Right ventricle myocardium superior (tissue), 1 donor: ENCODE measurements at regions of chr4 and their contacts with region 1.

Region 1: DNA sequence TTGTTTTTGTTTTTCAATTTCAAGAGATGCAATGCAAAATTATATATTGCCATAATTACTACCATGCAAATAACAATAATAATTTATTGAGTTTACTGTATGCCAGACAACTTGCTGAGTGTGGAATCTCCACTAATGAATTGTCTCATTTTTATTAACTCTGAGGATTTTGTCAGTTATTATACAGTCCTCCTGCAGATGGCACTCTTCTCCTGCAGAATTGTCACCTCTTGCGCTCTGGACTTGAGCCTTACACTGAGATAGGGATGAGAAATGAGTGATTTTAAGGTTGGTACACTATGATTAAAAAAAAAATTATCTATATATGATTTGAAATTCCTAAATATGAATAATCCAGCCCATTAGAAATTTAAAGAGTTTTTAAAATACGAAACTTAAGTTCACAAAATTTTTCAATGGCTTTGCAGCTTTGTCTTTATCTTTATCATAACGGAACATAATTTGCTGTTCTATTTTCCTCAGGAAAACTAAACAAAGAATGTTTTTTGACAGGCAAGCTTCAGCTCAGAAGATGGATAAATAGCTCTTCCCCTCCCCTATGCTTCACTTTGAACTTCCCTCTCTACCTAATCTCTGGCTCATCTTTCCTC is 12.7 kb upstream of the PAQR3 start:
- DNase-seq: no peak
- ATAC-seq: peak; percentile 85

Region 2: GRCh38 chr4:80202190-80202711 is 1250.3 kb after region 1 on chr4:
- intact Hi-C with region 1: loop called (anchors 10 kb)
- DNase-seq: peak; percentile 93
- ATAC-seq: peak; percentile 89

Region 3: DNA sequence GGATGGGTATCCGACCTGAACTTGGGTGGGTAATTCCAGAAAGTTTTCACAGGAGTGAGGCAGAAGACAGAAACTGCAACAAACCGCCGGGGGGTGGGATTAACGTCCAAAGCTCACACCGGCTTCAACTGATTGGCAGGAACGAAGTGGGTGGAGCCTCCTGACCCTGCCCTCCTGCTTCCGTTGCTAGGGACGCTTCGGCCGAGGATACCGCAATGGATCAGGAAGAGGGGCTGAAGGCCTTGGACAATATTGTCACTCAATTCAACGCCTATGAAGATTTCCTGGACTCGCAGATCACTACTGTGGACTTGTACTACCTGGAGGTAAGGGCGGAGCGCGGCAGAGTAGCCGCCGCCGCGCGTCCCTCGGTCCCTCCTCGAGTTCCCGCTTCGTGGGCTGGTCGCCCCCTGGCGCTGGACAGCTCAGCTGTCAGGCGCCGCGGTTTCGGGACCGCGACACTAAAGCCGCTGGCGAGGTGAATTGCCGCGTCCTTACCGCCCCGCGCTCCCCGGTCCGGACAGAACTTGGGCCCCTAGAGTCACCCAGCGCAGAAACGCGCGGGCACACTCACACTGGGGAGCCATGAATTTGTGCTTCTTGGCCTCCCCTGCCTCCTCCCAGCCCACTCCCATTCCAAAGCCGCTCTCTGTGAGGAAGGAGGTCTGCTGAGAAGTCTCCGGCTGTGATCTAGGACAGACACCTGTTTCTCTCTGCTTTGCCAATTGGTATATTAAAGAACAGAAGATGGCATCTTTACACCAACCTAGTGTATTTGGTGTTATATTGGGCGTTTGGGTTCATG is 1383.8 kb after region 1 on chr4 and contains the start of gene CFAP299:
- intact Hi-C with region 1: loop called (anchors 10 kb)
- DNase-seq: peak; percentile 91
- ATAC-seq: peak; percentile 99
- total RNA-seq, gene CFAP299: not detected